ENCODE measurements at regions of chr11 and their contacts with region 1.

Region 1: DNA sequence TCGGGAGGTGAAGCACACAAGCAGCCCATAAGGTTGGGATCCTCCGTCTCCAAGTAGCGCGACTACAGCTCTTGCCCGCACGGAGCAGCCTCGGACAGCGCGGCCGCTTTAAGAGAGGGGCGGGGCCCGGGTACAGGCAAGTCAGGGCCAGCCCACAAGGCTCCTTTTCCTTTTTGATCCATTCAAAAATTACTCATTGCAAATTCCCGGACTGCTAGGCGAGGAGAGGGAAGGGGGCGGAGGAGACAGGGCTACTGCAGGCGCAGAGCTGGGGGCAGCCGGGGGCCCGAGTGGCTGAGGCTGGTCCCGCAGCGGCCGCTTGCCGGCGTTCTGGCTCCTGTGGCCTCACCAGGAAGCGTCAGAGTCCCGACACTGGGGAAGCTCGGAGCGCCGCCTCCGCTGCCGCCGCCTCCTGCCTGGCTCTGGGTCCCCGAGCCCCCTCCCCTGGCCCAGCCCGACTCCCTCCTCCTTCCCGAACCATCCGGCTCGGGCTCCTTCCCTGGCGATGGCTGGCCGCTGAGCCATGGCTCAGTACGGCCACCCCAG is at the start of gene UBASH3B:
- DNase-seq: peak; percentile 64
- H3K4me3 Mint-ChIP-seq: peak within 1 kb of the TSS; percentile 93
- H3K27ac Mint-ChIP-seq: peak within 1 kb of the TSS; percentile 87
- H3K4me1 Mint-ChIP-seq: peaks cover 37% of the 10 kb centered on the region
- H3K27me3 Mint-ChIP-seq: no peaks in the 10 kb centered on the region
- total RNA-seq, gene UBASH3B: 17.9 to 21.1 TPM

Region 2: DNA sequence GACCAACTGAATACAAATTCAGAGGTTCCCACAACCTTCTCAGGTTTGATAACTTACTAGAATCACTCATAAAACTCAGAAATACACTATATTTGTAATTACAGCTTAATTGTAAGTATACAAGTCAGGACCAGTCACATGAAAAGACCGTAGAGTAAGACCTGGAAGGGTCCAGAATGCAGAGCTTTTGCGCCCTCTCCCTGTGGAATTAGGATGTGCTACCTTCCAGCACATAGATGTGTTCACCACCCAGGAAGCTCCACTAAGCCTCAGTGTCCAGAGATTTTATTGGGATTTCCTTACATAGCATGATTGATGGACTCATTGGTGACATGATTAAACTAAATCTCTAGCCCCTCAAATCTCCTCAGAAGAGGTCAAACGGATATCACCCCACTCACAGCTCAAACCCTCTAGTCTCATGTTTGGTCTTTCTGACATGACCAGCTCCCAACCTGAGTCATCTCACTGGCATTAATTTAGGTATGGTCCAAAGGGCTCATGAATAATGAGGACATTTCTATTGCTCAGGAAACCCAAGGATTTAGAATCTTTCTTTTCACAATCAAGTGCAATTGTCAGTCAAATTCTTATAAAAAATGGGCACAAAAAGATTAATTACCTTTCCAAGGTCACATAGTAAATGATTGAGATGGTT is 77.3 kb before region 1 on chr11:
- CTCF ChIA-PET with region 1: no interaction called
- intact Hi-C with region 1: loop called (anchors 2 kb)
- DNase-seq: peak; percentile 17
- H3K4me3 Mint-ChIP-seq: no peak overlapping the region
- H3K27ac Mint-ChIP-seq: no peak overlapping the region
- H3K4me1 Mint-ChIP-seq: peaks cover 7% of the 10 kb centered on the region
- H3K27me3 Mint-ChIP-seq: no peaks in the 10 kb centered on the region

Region 3: GRCh38 chr11:122668562-122669090 is 13.0 kb after region 1 on chr11:
- CTCF ChIA-PET with region 1: interaction called, 8 read pairs
- intact Hi-C with region 1: loop called (anchors 1 kb)
- DNase-seq: peak; percentile 27
- H3K4me3 Mint-ChIP-seq: no peak overlapping the region
- H3K27ac Mint-ChIP-seq: no peak overlapping the region
- H3K4me1 Mint-ChIP-seq: peaks cover 59% of the 10 kb centered on the region
- H3K27me3 Mint-ChIP-seq: no peaks in the 10 kb centered on the region

Region 4: DNA sequence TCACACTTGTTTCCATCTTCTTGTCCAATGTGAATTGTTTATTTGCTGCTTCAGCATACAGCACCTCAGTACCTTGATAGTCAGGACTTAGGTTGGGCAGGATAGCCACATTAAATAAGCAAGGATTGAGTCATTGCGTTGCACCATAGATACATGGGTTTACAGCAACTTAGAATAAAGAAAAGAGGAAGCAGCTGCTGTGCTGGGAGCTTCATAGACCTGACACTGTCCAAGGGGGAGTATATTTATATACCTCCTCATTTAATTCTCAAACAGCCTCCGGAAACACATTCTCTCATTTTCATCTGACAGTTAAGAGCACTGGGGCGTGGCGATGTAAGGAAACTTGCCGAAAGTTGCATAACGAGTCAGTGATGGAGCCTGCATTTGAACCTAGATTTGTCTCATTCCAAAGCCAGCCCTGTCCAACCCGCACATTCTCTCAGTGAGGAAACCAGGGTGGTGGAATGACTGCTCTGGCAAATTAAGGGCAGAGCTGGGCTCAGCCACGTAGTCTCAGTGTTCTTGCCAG is 42.1 kb after region 1 on chr11:
- CTCF ChIA-PET with region 1: interaction called, 6 read pairs
- intact Hi-C with region 1: loop called (anchors 1 kb)
- DNase-seq: peak; percentile 77
- H3K4me3 Mint-ChIP-seq: peak overlapping the region; percentile 50
- H3K27ac Mint-ChIP-seq: peak overlapping the region; percentile 78
- H3K4me1 Mint-ChIP-seq: peaks cover 77% of the 10 kb centered on the region
- H3K27me3 Mint-ChIP-seq: no peaks in the 10 kb centered on the region

Region 5: GRCh38 chr11:122749005-122749687 is 93.5 kb after region 1 on chr11:
- CTCF ChIA-PET with region 1: interaction called, 15 read pairs
- intact Hi-C with region 1: loop called (anchors 1 kb)
- DNase-seq: peak; percentile 83
- H3K4me3 Mint-ChIP-seq: no peak overlapping the region
- H3K27ac Mint-ChIP-seq: no peak overlapping the region
- H3K4me1 Mint-ChIP-seq: peaks cover 17% of the 10 kb centered on the region
- H3K27me3 Mint-ChIP-seq: peaks cover 3% of the 10 kb centered on the region

Measured in activated naive CD4-positive, alpha-beta T cell treated with anti-CD3 and anti-CD28 coated beads for 36 hours (primary cell).